Dorsolateral prefrontal cortex (tissue), 120 donors: ENCODE measurements at regions of chr3 and their contacts with region 1.

Region 1: GRCh38 chr3:94062431-94063404 is at the starts of genes DHFR2 and NSUN3:
- DNase-seq: peak; percentile 66 to 92 (median 84)
- H3K4me3 ChIP-seq: peak within 1 kb of the TSS; percentile 56 to 95 (median 84)
- H3K27ac ChIP-seq: peak within 1 kb of the TSS; percentile 71 to 98 (median 93)
- H3K27me3 ChIP-seq: no peaks in the 10 kb centered on the region
- CTCF ChIP-seq: peak in 15 of 56 donors; percentile 3 to 48 (median 19)
- total RNA-seq, gene DHFR2: 3.7 to 20.5 (median 9.2) TPM
- total RNA-seq, gene NSUN3: 8.3 to 22.2 (median 16.8) TPM

Region 2: GRCh38 chr3:93979833-93980676 is 82.7 kb before region 1 on chr3 and contains the start of gene ARL13B:
- intact Hi-C with region 1: loop called in 1 of 2 experiments (anchors 2 kb)
- DNase-seq: peak; percentile 90 to 99 (median 98)
- H3K4me3 ChIP-seq: peak within 1 kb of the TSS; percentile 54 to 99 (median 90)
- H3K27ac ChIP-seq: peak within 1 kb of the TSS in 57 of 59 donors; percentile 14 to 92 (median 77)
- H3K27me3 ChIP-seq: no peaks in the 10 kb centered on the region
- CTCF ChIP-seq: peak in 13 of 56 donors; percentile 4 to 31 (median 15)
- total RNA-seq, gene ARL13B: 6.6 to 21.9 (median 13.0) TPM